HepG2 (cell line): ENCODE measurements at regions of chr3 and their contacts with region 1.

Region 1: DNA sequence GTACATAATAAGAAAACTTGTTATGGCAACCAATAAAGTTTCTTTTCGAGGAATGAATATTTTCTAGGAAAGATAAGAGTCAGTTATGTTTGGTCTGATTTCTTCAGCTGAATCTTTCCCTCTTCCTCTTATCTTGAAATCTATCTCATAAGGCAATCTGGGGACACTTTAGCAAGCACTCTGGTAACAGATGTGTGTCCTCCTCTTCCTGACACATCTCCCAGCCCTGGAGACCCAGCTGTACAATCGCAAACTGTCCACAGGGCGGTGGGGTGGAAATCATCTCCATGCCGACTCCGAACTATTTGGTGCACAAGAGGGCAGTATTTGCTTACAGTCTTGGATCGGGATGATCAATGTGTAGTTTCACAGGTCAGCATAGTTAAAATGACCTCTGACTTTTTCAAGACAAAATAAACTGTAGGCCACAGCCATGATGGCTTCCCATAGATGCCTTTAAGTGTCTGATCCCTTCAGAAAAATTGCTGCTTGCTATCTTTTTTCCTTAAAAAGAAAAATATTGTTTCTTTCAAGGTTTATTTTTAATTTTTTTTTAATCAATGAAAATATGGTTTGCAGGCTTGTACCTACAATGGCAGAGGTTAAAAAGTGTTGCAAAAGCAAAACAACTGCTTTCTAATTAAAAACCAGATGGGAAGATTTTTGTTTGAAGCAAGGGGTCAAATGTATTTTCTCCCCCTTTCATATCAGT is 17.7 kb downstream of the EEFSEC start:
- DNase-seq: peak; percentile 91
- ATAC-seq: peak; percentile 67
- H3K4me3 ChIP-seq: no peak overlapping the region
- H3K27ac ChIP-seq: peak overlapping the region; percentile 99
- H3K4me1 ChIP-seq: peaks cover 77% of the 10 kb centered on the region
- H3K27me3 ChIP-seq: no peaks in the 10 kb centered on the region
- CTCF ChIP-seq: peak; percentile 95
- EP300 ChIP-seq: peak in 1 of 2 experiments; percentile 52; a peak in 2 of 4 replicates
- POLR2A ChIP-seq: no peak
- RAD21 ChIP-seq: peak; percentile 91

Region 2: GRCh38 chr3:128068211-128068620 is 102.7 kb before region 1 on chr3:
- CTCF ChIA-PET with region 1: no interaction called
- POLR2A ChIA-PET with region 1: no interaction called
- in situ Hi-C with region 1: no loop called
- intact Hi-C with region 1: no loop called
- DNase-seq: peak; percentile 57
- ATAC-seq: peak; percentile 41
- H3K4me3 ChIP-seq: no peak overlapping the region
- H3K27ac ChIP-seq: no peak overlapping the region
- H3K4me1 ChIP-seq: no peaks in the 10 kb centered on the region
- H3K27me3 ChIP-seq: no peaks in the 10 kb centered on the region
- CTCF ChIP-seq: peak; percentile 61
- EP300 ChIP-seq: no peak
- POLR2A ChIP-seq: no peak; a peak in 1 of 4 replicates
- RAD21 ChIP-seq: no peak

Region 3: DNA sequence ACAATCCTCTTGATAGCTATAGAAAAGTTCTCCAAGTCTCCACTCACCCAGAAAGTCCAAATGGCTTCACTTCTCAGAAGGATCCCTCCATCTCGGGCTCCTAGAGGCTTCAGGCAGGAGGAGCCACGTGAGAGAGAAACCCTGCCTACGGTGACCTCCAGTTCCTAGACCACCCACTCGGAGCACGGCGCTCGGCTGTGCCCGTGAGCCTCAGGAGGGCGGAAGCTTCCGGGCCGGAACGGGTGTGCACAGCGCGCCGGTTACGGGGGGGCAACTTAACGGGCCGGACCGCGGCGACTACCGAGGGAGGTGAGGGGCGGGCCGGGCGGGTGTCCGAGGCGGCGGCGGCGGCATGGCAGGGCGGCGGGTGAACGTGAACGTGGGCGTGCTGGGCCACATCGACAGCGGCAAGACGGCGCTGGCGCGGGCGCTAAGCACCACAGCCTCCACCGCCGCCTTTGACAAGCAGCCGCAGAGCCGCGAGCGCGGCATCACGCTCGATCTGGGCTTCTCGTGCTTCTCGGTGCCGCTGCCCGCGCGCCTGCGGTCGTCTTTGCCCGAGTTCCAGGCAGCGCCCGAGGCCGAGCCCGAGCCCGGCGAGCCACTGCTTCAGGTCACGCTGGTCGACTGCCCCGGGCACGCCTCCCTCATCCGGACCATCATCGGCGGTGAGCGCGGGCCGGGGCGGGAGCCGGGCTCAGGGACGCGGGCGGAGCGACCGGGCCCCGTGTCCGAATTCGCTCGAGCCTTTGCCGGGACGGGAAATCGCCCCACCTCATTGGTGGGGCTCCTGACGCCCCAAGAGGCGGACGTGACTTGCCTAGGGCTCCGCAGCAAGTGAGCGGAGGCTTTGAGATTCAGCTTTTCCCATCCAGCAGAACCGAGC is 17.6 kb before region 1 on chr3 and contains the start of gene EEFSEC:
- CTCF ChIA-PET with region 1: interaction called, 5 read pairs
- POLR2A ChIA-PET with region 1: interaction called, 104 read pairs
- in situ Hi-C with region 1: no loop called
- intact Hi-C with region 1: loop called (anchors 1 kb)
- DNase-seq: peak; percentile 36
- ATAC-seq: peak; percentile 87
- H3K4me3 ChIP-seq: peak within 1 kb of the TSS; percentile 86 to 95 (median 87)
- H3K27ac ChIP-seq: peak within 1 kb of the TSS; percentile 99
- H3K4me1 ChIP-seq: peaks cover 49% of the 10 kb centered on the region
- H3K27me3 ChIP-seq: no peaks in the 10 kb centered on the region
- CTCF ChIP-seq: peak; percentile 26; the same call in 1 of the 2 replicates
- EP300 ChIP-seq: no peak; a peak in 1 of 4 replicates
- POLR2A ChIP-seq: peak; percentile 77 to 82; a peak in 3 of 4 replicates
- RAD21 ChIP-seq: peak; percentile 65
- total RNA-seq, gene EEFSEC: 6.4 and 7.9 TPM in 2 replicates

Region 4: DNA sequence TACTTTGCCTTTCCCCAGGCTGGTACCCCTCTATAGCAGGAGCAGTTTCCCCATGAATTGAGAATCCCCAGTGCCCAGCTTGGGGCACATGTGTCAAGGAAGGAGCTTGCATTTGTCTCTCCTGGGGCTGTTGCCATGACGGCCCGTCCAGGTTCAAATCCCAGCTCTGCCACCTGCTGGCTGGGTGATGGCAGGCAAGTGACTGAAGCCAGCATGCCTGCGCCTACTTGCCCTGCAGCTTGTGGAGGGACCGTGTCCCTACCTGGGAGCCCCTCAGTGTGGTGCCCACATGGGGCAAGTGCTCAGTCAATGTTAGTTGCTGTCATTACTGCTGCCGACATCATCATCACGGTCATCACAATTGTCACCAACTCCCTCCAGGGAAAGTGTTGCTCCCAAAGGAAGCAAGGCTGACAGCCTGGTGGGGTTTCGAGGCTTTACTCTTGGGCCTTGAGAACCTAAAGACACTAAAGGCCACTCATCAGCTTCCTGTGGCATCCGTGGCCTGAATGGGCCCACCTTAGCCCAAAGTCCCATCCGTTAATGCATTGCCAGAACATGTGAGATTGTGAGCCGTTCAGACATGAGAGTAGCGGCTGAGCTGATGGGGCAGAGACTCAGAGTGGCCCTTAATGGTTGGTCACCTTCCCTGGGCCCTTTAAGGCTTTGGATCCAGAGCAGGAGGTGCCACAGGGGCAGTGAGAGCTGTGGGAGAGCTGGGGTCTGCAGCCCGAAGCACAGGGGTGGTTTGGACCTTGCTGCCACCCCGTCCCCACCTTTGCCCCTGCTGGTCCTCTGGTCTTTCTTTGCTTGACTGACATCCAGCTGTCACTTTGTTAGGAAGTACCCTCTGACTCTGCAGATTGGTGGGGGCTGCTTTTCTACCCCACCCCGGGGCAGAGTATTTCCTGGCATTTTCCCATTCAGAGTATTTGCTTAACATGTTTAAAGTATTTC is 151.4 kb after region 1 on chr3:
- CTCF ChIA-PET with region 1: interaction called, 7 read pairs
- POLR2A ChIA-PET with region 1: no interaction called
- in situ Hi-C with region 1: loop called (anchors 10 kb)
- intact Hi-C with region 1: loop called (anchors 5 kb)
- DNase-seq: no peak
- ATAC-seq: peak; percentile 51
- H3K4me3 ChIP-seq: no peak overlapping the region
- H3K27ac ChIP-seq: no peak overlapping the region
- H3K4me1 ChIP-seq: peaks cover 37% of the 10 kb centered on the region
- H3K27me3 ChIP-seq: no peaks in the 10 kb centered on the region
- CTCF ChIP-seq: peak; percentile 62
- EP300 ChIP-seq: no peak
- POLR2A ChIP-seq: no peak
- RAD21 ChIP-seq: peak; percentile 33; the same call in 1 of the 2 replicates

Region 5: DNA sequence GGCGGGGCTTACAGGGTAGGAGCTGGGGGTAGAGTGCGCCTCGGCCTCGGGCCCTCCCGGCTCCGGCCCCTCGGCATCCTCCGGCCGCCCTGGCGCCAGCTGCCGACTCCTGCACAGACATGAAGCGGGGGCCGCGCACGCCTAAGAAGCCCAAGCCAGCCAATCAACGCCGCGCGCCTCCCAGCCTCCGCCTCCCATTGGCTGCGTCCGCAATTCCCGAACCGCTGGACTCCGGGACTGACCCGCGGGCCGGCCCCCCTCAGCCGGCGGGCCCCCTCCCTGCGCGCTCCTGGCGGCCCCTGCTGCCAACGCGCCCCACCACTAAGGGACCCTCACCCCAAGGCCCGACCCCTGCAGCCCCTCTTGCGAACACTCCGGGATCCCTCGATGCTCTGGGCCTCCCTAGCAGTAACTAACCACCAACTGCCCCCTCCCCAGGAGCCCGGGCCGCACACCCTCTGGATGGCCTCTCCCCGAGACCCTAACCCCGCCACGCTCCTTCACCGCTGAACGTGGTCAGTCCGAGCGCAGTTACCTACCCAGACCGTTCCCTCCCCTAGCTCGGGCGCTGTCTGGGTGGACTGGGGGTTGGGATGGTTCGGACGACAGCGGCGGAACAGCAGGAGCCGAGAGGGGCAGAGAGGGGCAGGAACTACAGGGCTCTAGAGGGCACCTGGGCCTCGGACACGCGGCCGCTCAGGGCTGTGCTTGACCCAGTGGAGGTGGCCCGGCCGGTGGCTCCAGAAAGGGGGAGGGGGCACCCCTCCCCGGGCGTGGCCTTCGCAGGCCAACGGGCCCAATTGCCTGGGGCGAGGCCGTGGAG is 317.1 kb after region 1 on chr3:
- CTCF ChIA-PET with region 1: no interaction called
- POLR2A ChIA-PET with region 1: no interaction called
- in situ Hi-C with region 1: loop called (anchors 5 kb)
- intact Hi-C with region 1: no loop called
- DNase-seq: peak; percentile 89
- ATAC-seq: peak; percentile 81
- H3K4me3 ChIP-seq: peak overlapping the region; percentile 87 to 91 (median 87)
- H3K27ac ChIP-seq: peak overlapping the region; percentile 80
- H3K4me1 ChIP-seq: peaks cover 32% of the 10 kb centered on the region
- H3K27me3 ChIP-seq: no peaks in the 10 kb centered on the region
- CTCF ChIP-seq: 0 out of 2 replicates have a peak, but pooled peaks have one; percentile 5
- EP300 ChIP-seq: 0 out of 4 replicates have a peak, but pooled peaks of 1 of the 2 experiments have one; percentile 19
- POLR2A ChIP-seq: peak in 1 of 2 experiments; percentile 80; a peak in 2 of 4 replicates
- RAD21 ChIP-seq: no peak; the same call in 1 of the 2 replicates